BJ (cell line): ENCODE measurements at regions of chr11 and their contacts with region 1.

Region 1: DNA sequence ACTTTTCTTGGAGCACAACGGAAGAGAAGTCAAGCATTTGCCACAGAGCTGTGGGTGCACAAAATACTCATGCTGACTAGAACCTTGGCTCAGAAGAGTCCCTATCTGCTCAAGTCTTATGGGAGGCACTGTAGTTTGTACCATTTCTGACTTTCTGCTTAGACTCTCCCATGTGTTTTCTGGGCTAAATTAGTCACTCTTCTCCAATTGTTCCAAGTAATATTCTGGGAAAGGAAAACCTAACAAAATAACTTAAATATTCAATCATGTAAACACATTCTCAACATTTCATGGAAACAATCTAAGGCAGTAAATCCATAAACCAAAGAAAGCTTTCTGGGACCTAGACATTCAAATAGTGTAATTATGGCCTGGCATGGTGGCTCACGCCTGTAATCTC is 220.7 kb downstream of the SWAP70 start:
- DNase-seq: no peak
- H3K4me3 ChIP-seq: no peak overlapping the region
- H3K27me3 ChIP-seq: no peaks in the 10 kb centered on the region
- CTCF ChIP-seq: no peak

Region 2: DNA sequence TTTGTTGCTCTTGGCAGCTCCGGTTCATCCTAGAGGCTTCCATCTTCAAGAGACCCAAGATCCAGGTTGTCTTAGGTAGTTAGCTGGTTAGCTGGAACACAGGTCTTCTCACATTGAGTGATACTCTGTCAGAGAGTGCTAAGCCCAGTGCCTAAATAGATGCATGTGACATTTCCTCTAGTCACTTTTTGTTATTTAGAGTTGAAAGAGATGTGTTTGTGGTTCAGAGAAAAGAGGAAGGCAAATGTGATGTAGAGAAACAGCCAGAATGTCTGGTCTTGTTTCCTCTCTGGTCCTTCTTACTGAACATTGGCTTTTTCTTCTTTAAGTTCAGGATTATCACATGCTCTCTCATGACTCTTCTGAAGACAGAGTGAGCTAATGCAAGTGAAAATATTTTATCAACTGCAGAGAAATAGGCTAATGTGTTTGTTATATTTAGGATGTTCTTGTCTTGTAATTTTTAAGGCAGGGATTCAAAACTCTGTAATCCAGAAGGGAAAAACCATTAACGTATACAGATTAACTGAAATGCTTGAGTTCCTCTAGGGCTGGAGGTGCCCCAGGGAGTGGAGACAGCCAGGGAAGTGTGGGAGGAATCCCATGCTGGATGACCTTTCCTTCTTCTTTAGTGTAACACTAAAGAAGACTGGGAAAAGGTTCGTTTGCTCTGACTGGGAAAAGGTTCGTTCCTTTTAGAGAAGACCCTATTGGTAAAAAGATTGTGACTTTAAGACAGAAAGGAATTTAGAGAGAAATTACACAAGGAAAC is 145.3 kb before region 1 on chr11:
- CTCF ChIA-PET with region 1: no interaction called
- POLR2A ChIA-PET with region 1: no interaction called
- DNase-seq: no peak
- H3K4me3 ChIP-seq: no peak overlapping the region
- H3K27me3 ChIP-seq: no peaks in the 10 kb centered on the region
- CTCF ChIP-seq: no peak

Region 3: DNA sequence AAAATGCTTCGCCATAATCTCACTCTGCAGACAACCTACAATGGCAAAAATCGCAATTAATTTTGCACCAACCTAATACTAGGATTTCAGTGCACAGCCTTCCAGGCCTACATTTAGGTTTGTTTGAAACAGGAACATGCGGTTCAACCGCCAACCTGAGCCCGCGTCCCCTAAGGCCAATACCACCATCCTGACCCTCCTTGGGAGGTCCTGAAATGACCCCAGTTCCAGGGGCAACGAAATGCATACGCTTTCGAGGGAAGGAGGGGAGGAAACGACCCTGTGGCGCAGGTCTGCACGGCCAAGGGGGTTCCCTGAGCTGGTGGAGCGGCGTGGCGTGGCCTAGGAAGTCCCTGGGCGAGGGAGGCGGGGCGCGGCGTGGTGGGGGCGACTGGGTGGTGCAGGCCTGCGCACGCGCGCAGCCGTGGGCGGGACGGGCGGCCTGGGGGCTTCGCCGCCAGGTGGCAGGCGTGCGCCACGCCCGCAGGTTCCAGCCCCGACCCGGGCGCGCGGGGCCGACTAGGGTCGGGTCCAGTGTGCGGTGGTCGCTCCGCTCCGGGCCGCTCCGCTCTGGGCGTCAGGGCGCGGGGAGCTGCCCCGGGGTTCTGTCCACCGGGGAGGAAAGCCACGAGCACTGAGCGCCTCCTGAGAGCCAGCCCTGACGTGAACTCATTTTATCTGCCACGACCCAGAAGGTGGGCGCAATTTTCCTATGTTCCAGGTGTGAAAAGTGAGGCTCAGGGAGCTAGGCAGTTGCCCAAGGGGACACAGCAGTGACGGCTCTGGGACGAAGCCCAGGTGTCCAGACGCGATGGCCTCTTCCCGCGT is 126.6 kb before region 1 on chr11:
- CTCF ChIA-PET with region 1: no interaction called
- POLR2A ChIA-PET with region 1: interaction called, 10 read pairs
- DNase-seq: no peak
- H3K4me3 ChIP-seq: peak overlapping the region; percentile 30
- H3K27me3 ChIP-seq: no peaks in the 10 kb centered on the region
- CTCF ChIP-seq: no peak; the same call in 1 of the 2 replicates

Region 4: DNA sequence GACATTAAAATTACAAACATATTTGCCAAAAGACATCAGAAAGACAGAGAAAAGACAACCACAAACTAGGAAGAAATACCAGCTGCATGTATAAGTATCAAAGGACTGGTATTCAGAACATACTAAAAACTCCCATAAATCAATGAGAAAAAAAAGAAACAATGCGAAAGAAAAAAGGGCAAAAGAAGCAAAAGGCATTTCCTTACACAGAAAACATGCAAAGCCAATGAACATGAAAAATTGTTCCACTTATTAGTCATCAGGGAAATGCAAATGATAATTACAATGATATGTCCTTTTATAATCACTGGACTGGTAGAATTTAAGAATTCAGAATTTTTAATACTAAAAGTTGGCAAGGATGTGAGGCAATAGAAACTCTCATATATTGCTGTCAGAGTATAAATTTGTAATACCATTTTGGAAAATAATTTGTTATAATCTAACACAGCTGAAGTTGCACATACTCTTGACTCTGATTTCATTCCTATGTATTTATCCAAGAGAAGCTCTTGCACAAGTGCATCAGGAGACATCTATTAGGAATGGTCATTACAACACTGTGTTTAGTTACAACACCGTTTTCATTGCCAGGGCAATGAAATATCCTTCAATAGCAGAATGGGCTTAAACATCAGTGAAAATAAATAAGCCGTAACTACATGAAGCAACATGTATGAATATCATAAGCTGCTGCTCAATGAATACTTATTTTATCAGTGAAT is 58.9 kb after region 1 on chr11:
- CTCF ChIA-PET with region 1: no interaction called
- POLR2A ChIA-PET with region 1: interaction called, 21 read pairs
- DNase-seq: peak; percentile 96
- H3K4me3 ChIP-seq: no peak overlapping the region
- H3K27me3 ChIP-seq: no peaks in the 10 kb centered on the region
- CTCF ChIP-seq: no peak